PC-9 (cell line): ENCODE measurements at regions of chr3 and their contacts with region 1.

Region 1: DNA sequence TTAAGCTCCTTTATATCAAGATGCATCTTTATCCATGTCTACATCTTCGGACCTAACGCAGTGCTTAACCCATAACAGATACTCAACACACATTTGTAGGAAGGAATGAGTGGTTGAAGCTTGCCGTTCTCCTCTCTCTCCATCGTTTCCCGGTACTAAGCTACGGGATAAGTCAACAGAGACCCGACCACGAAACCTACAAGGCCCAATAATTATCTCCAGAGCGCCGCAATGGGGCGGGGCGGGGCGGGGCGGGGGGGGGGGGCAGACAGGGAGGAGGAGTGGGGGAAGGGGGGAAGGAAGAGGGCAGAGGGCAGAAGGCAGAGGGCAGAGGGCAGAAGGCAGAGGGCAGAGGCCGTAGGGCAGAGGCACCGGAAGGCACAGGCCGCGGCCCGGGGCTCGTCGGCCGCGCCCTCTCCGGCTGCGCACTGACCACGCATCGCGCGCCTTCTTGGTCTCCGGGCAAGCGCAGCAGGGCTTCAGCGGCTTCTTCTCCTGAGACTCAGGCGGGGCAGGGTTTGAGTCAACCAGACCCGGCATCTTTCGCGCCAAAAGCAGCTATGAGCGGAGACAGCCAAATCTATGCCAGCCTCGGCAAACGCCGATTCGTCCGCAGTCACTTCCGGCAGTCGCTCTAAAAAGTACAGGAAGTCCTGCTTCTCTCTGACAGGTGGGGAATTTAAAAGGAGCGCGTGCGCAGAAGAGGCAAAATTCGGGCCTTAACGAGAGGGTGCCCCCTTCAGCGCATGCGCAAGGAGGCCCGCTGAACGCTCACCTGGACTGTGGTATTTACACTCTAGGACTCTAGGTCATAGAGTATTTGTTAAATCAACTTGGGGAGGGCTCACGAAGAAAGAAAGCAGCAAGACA is at the start of gene COX17:
- DNase-seq: peak; percentile 92 to 96
- H3K4me3 ChIP-seq: peak within 1 kb of the TSS; percentile 81
- H3K27ac ChIP-seq: peak within 1 kb of the TSS; percentile 59
- H3K4me1 ChIP-seq: peaks cover 15% of the 10 kb centered on the region
- H3K27me3 ChIP-seq: no peaks in the 10 kb centered on the region
- CTCF ChIP-seq: no peak
- total RNA-seq, gene COX17: 57.6 and 61.4 TPM in 2 replicates

Region 2: DNA sequence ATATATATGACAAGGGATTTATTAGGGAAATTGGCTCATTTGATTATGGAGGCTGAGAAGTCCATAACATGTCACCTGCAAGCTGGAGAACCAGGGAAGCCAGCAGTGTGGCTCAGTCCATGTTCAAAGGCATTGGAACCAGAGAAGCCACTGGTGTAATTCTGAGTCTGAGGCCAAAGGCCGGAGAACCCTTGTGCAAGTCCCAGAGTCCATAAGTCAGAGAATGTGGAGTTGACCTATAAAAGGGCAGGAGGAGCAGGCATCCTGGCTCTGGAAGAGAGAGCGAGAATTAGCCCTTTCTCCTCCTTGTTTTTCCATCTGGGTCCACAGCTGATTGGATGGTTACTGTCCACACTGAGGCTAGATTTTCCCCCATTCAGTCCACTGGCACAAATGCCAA is 962.2 kb before region 1 on chr3:
- CTCF ChIA-PET with region 1: no interaction called
- POLR2A ChIA-PET with region 1: no interaction called
- intact Hi-C with region 1: no loop called
- DNase-seq: no peak
- H3K4me3 ChIP-seq: no peak overlapping the region
- H3K27ac ChIP-seq: no peak overlapping the region
- H3K4me1 ChIP-seq: no peaks in the 10 kb centered on the region
- H3K27me3 ChIP-seq: no peaks in the 10 kb centered on the region
- CTCF ChIP-seq: no peak

Region 3: GRCh38 chr3:119034256-119035013 is 642.6 kb before region 1 on chr3 and contains the start of gene IGSF11:
- CTCF ChIA-PET with region 1: no interaction called
- POLR2A ChIA-PET with region 1: no interaction called
- intact Hi-C with region 1: loop called (anchors 1 kb)
- DNase-seq: peak in 1 of 2 experiments; percentile 66
- H3K4me3 ChIP-seq: peak within 1 kb of the TSS; percentile 70
- H3K27ac ChIP-seq: no peak within 1 kb of the TSS
- H3K4me1 ChIP-seq: 0 out of 2 replicates have a peak, but pooled peaks cover 4% of the 10 kb centered on the region
- H3K27me3 ChIP-seq: peaks cover 35% of the 10 kb centered on the region
- CTCF ChIP-seq: no peak; the same call in 1 of the 2 replicates
- total RNA-seq, gene IGSF11: not detected in 2 replicates

Region 4: DNA sequence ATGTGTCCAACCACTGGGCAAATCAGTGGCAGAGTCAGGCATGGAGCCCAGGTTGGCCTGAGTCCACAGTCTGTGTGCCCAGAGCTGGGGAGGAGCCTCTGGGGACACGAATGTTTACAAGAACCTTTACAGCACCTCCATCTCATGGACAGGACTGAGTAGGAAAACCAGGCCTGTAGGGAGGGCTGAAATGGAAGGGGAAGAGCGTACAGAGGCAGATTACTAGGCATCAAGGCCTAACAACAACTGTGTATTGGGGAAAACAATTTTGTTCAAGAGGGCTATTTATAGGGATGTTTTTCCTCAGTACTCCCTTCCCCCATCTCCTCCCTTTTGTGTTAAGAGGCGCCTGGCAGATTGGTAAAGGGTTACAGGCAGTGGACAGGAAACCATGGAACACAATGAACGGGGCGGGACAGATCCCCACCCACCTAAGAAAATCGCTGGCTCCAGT is 397.9 kb before region 1 on chr3:
- CTCF ChIA-PET with region 1: no interaction called
- POLR2A ChIA-PET with region 1: no interaction called
- intact Hi-C with region 1: loop called (anchors 1 kb)
- DNase-seq: no peak
- H3K4me3 ChIP-seq: no peak overlapping the region
- H3K27ac ChIP-seq: no peak overlapping the region
- H3K4me1 ChIP-seq: no peaks in the 10 kb centered on the region
- H3K27me3 ChIP-seq: no peaks in the 10 kb centered on the region
- CTCF ChIP-seq: no peak

Region 5: GRCh38 chr3:119498186-119498987 is 178.6 kb before region 1 on chr3 and contains the start of gene TIMMDC1:
- CTCF ChIA-PET with region 1: no interaction called
- POLR2A ChIA-PET with region 1: no interaction called
- intact Hi-C with region 1: loop called (anchors 1 kb)
- DNase-seq: peak; percentile 94 to 97
- H3K4me3 ChIP-seq: peak within 1 kb of the TSS; percentile 98
- H3K27ac ChIP-seq: peak within 1 kb of the TSS; percentile 85
- H3K4me1 ChIP-seq: peaks cover 24% of the 10 kb centered on the region; the same call in 1 of the 2 replicates
- H3K27me3 ChIP-seq: no peaks in the 10 kb centered on the region
- CTCF ChIP-seq: no peak
- total RNA-seq, gene TIMMDC1: 145 and 203 TPM in 2 replicates

Region 6: DNA sequence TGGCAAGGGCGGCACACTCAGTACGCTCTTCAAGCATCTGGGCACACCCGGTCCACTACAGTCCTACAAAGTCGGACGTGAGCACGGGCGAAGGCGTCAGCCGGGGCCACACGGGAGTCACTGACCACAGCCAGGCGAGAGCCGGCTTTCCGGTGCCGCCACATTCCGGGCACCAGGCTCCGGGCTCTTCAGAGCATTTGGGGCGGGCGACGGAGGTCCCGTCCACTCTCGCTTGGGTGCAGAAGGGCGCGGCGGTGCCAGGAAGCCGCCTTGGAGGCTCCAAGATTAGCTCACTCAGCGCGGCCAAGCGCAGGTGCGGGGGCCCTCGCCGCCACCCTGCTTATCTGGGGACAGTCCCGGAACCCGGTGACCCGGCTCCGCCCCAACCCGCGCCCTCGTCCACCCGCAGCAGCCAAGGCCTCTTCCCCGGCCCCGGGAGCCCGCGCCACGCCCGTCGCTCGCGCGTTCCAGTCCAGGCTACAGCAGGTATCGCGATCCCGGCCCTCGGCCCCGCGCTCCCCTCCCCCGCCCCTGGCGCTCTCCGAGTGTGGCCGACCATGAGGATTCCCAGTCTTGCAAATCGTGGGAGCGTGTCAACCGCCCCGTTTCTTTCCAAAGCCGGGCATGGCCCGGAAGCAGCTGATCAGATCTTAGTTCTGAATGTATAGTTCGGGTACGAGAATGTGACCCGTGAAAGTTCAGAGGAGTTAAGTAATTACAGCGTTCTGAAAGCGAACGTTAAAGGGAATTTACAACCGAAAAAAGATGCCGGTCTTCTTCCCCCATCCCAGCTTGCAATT is 97.4 kb before region 1 on chr3 and contains the start of gene ADPRH:
- CTCF ChIA-PET with region 1: no interaction called
- POLR2A ChIA-PET with region 1: no interaction called
- intact Hi-C with region 1: loop called (anchors 2 kb)
- DNase-seq: peak in 1 of 2 experiments; percentile 73
- H3K4me3 ChIP-seq: peak within 1 kb of the TSS; percentile 59
- H3K27ac ChIP-seq: no peak within 1 kb of the TSS
- H3K4me1 ChIP-seq: no peaks in the 10 kb centered on the region
- H3K27me3 ChIP-seq: no peaks in the 10 kb centered on the region
- CTCF ChIP-seq: no peak
- total RNA-seq, gene ADPRH: 1.4 and 1.6 TPM in 2 replicates

Region 7: GRCh38 chr3:120182724-120183524 is 505.9 kb after region 1 on chr3:
- CTCF ChIA-PET with region 1: no interaction called
- POLR2A ChIA-PET with region 1: no interaction called
- intact Hi-C with region 1: loop called (anchors 1 kb)
- DNase-seq: peak; percentile 53 to 57
- H3K4me3 ChIP-seq: no peak overlapping the region
- H3K27ac ChIP-seq: peak overlapping the region; percentile 7; the same call in 1 of the 2 replicates
- H3K4me1 ChIP-seq: peaks cover 38% of the 10 kb centered on the region
- H3K27me3 ChIP-seq: no peaks in the 10 kb centered on the region
- CTCF ChIP-seq: peak; percentile 61